ENCODE measurements at regions of chr16 and their contacts with region 1.

Region 1: DNA sequence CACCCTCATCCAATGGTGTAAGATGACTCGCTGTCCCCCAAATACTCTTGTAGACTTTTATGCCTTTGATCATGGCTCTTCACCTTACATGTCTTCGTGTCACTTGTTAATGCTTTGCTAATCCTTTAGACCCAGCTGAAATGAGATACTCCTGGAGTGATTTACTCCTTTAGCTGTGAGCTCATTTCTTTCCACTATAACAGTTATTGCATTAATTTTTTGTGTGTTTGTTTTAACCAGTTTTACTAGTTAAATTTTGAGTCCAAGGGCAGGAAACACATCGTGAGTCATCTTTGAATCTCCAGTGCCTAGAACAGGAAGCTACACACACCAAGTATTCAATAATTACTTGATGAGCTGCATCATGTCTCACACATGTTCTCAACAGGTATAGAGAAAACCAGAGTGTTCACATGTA is 6.5 kb upstream of the CTCF start:
- DNase-seq: peak in 1 of 2 experiments; percentile 91
- H3K4me3 ChIP-seq: no peak overlapping the region
- H3K27ac ChIP-seq: peak overlapping the region; percentile 70
- H3K4me1 ChIP-seq: peaks cover 26% of the 10 kb centered on the region
- H3K27me3 ChIP-seq: no peaks in the 10 kb centered on the region
- CTCF ChIP-seq: 0 out of 2 replicates have a peak, but pooled peaks have one; percentile 16

Region 2: DNA sequence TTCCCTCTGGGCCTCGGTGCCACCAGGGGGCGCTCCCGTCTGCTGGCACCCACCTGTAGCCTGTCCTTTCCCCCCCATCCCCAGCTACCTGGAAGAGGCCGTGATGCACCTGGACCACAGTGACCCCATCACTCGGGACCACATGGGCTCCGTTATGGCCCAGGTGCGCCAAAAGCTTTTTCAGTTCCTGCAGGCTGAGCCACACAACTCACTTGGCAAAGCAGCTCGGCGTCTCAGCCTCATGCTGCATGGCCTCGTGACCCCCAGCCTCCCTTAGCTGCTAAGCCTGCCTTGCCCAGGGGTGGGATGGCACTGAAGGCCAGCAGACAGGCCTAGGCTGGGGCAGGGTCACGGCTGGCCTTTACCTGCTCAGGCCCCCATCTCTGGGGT is 328.1 kb after region 1 on chr16:
- CTCF ChIA-PET with region 1: no interaction called
- POLR2A ChIA-PET with region 1: interaction called, 10 read pairs
- intact Hi-C with region 1: no loop called
- DNase-seq: peak in 1 of 2 experiments; percentile 67
- H3K4me3 ChIP-seq: no peak overlapping the region
- H3K27ac ChIP-seq: no peak overlapping the region
- H3K4me1 ChIP-seq: no peaks in the 10 kb centered on the region
- H3K27me3 ChIP-seq: no peaks in the 10 kb centered on the region
- CTCF ChIP-seq: peak; percentile 92

Measured in PC-9 (cell line).